ENCODE measurements at regions of chr2 and their contacts with region 1.

Region 1: GRCh38 chr2:32772638-32773447 is 145.0 kb downstream of the TTC27 start:
- DNase-seq: peak; percentile 67
- H3K4me3 ChIP-seq: no peak overlapping the region
- H3K27ac ChIP-seq: no peak overlapping the region
- H3K4me1 ChIP-seq: no peaks in the 10 kb centered on the region
- H3K27me3 ChIP-seq: no peaks in the 10 kb centered on the region
- CTCF ChIP-seq: peak; percentile 80

Region 2: DNA sequence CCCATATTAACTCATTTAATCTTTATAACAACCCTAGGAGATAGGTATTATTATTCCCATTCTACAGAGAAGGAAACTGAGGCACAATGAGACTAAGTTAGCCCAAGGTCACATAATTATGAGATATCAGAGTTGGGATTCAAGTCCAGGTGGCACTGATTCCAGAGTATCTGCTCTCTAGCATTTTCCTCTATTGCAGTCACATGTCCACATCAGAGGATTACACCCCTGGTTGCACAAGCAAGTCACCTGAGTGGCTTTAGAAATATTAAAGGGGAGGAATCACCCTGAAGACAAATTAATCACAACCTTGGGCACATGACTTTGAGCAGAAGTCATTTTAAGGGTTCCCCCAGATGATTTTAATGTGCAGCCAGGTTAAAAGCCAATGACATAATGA is 1215.9 kb before region 1 on chr2:
- CTCF ChIA-PET with region 1: no interaction called
- POLR2A ChIA-PET with region 1: no interaction called
- intact Hi-C with region 1: no loop called
- DNase-seq: no peak
- H3K4me3 ChIP-seq: no peak overlapping the region
- H3K27ac ChIP-seq: no peak overlapping the region
- H3K4me1 ChIP-seq: no peaks in the 10 kb centered on the region
- H3K27me3 ChIP-seq: peaks cover 8% of the 10 kb centered on the region
- CTCF ChIP-seq: no peak

Region 3: DNA sequence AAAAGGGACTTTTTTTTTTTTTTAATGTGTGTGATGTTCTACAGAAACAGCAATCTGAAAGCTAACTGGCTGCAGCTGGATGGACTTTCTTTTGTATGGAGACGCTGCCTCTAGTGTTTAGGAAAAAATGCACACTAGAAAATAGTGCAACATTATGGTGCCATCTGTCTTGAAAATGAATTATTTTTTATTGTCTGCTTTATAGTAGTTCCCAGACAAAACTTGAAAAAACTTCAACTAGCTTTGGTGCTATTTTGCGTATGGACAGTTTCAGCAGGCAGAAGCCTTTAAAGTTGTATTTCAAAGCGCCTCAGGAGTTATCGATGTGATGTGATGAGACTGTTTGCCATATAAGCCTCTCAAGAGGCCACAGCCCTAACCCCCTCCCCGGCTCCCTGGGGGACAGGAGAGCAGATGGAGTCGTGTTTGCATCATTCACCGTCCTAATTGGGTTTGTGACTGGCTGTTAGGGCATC is 260.8 kb after region 1 on chr2:
- CTCF ChIA-PET with region 1: no interaction called
- POLR2A ChIA-PET with region 1: no interaction called
- intact Hi-C with region 1: loop called (anchors 2 kb)
- DNase-seq: peak; percentile 56
- H3K4me3 ChIP-seq: no peak overlapping the region
- H3K27ac ChIP-seq: no peak overlapping the region
- H3K4me1 ChIP-seq: peaks cover 23% of the 10 kb centered on the region
- H3K27me3 ChIP-seq: no peaks in the 10 kb centered on the region
- CTCF ChIP-seq: peak; percentile 57

Region 4: GRCh38 chr2:33267756-33268155 is 494.9 kb after region 1 on chr2:
- CTCF ChIA-PET with region 1: no interaction called
- POLR2A ChIA-PET with region 1: no interaction called
- intact Hi-C with region 1: loop called (anchors 5 kb)
- DNase-seq: peak; percentile 23
- H3K4me3 ChIP-seq: no peak overlapping the region
- H3K27ac ChIP-seq: no peak overlapping the region
- H3K4me1 ChIP-seq: no peaks in the 10 kb centered on the region
- H3K27me3 ChIP-seq: no peaks in the 10 kb centered on the region
- CTCF ChIP-seq: no peak

Region 5: DNA sequence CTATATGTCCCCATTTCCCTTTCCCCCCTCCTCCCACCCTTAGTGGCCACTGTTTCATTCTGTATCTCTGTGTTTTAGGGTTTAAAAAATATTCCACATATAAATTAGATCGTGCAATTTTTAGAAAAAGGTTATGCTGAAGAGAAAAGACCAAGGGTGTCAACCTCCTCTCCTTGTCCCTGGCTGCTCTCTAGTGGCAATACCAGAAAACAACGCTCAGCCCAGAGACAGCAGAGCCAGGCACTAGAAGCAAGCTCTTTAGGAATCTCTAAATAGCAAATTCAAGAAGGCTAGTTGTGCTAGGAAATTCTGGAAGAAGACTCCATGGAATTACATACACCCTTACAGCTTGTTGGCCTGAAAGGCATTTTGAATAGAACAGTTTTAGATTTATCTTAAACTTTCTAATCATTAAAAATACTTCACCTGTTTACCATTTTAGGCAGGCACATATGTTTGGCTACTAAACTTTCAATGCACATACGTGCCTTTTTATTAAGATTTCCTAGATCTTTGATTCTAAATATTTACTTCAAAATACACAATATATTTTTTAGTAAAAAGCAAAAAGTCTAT is 668.5 kb after region 1 on chr2:
- CTCF ChIA-PET with region 1: no interaction called
- POLR2A ChIA-PET with region 1: no interaction called
- intact Hi-C with region 1: loop called (anchors 2 kb)
- DNase-seq: peak; percentile 65
- H3K4me3 ChIP-seq: no peak overlapping the region
- H3K27ac ChIP-seq: no peak overlapping the region
- H3K4me1 ChIP-seq: no peaks in the 10 kb centered on the region
- H3K27me3 ChIP-seq: no peaks in the 10 kb centered on the region
- CTCF ChIP-seq: peak; percentile 74

Measured in A673 (cell line).